ENCODE measurements at regions of chr3 and their contacts with region 1.

Region 1: DNA sequence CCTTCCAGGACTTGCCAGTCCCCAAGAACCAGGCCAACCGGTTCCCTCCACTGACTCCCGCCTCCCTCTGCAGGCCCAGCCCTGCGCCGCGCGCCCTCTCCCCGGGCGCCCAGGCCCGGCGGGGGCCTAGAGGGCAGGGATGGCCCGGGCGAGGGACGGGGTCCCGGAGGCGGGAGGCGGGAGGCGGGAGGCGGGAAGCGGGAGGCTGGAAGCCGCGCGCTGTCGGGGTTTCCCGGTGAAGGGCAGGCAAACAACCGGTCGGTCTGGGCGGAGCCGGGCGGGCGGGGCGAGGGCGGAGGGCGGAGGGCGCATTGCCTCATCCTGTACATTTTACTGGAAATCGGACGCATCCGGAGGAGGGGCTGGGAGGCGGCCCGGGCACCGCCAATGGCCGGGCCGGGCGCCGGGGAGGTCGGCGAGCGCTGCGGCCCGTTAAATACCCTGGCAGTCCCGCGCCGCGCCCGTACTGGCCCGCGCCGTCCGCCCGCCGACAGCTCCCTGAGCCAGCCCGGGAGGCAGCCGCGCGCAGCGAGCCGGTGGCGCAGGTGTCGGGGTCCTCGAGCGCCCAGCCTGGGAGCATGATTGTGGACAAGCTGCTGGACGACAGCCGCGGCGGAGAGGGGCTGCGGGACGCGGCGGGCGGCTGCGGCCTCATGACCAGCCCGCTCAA is at the start of gene NFKBIZ:
- DNase-seq: peak; percentile 95
- CTCF ChIP-seq: no peak

Region 2: GRCh38 chr3:101709126-101709525 is 140.1 kb before region 1 on chr3:
- CTCF ChIA-PET with region 1: no interaction called
- POLR2A ChIA-PET with region 1: no interaction called
- DNase-seq: no peak
- CTCF ChIP-seq: no peak

Region 3: GRCh38 chr3:101819758-101820157 is 29.4 kb before region 1 on chr3:
- CTCF ChIA-PET with region 1: interaction called, 3 read pairs
- POLR2A ChIA-PET with region 1: interaction called, 10 read pairs
- DNase-seq: no peak
- CTCF ChIP-seq: no peak

Region 4: DNA sequence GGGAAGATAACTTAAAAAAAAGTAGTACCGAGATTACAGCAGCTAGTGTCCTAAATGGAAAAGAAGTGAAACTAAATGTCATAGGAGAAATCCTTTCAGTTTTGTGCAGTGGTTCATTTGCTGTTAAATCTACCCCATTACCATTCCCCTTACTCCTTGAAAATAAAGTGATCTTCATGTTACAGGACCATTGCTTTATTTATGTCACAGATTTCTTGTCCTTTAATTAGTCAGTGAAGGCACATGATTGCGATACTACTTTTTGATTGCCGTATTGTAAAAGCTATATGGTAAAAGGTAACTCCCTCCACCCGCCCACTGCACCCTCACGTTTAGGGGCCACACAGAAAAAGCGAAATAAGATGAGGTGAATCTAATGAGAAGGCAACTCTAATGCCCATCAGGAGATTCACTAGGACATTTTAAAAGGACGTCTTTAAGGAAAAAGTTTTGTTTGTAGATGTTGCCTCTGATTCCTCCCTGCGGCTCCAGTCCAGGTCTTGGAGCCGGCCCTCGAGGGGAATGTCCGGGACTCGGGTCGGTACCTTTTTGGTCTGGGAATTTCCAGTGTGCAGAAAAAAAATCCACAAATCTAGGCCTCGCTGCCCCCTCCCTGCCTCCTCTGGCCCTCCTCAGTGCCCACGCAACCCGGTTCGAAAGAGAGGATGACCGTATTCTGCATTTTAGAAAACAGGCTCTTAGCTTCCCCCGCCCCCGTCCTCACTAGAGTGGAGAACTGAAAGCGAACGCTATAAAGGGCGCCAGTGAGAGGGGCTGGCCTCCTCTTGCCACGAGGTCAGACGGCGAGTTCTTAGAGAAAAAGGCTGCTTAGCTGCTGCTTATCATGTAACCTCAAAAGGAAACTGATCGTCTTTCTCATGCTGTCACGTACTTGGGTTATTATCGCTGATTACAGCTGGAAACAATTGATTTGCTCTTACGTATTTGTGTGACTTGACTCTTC is 21.7 kb before region 1 on chr3:
- CTCF ChIA-PET with region 1: interaction called, 6 read pairs
- POLR2A ChIA-PET with region 1: interaction called, 54 read pairs
- DNase-seq: peak; percentile 80
- CTCF ChIP-seq: no peak

Region 5: GRCh38 chr3:101836652-101837598 is 12.3 kb before region 1 on chr3:
- CTCF ChIA-PET with region 1: interaction called, 4 read pairs
- POLR2A ChIA-PET with region 1: interaction called, 42 read pairs
- DNase-seq: no peak
- CTCF ChIP-seq: no peak

Region 6: DNA sequence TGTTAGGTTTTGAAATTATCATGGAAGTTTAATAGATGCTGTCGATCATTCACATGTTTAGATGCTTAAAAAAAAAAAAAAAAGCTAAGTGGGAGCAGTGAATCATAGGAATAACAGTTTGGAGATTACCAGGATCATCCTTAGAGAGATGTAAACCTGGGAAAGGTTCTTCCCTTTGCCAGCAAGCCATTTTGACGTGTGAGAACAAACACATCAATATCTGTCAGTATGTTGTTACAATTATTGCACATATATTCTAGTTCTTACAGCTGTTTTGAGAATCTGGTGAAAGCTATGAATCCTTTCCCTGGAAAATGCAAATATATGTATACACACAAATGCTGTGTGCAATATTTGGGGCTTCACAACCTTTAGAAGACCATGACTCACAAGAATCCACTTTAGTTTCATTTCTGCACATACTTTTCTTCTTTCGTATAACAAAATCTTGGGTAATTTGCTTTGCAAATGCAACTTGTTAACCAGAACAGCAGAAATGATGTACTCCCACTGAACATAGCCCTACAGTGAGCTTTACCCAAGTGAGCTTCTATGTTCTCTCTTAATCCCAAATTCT is 12.1 kb after region 1 on chr3:
- CTCF ChIA-PET with region 1: interaction called, 3 read pairs
- POLR2A ChIA-PET with region 1: interaction called, 23 read pairs
- DNase-seq: no peak
- CTCF ChIP-seq: no peak

Region 7: DNA sequence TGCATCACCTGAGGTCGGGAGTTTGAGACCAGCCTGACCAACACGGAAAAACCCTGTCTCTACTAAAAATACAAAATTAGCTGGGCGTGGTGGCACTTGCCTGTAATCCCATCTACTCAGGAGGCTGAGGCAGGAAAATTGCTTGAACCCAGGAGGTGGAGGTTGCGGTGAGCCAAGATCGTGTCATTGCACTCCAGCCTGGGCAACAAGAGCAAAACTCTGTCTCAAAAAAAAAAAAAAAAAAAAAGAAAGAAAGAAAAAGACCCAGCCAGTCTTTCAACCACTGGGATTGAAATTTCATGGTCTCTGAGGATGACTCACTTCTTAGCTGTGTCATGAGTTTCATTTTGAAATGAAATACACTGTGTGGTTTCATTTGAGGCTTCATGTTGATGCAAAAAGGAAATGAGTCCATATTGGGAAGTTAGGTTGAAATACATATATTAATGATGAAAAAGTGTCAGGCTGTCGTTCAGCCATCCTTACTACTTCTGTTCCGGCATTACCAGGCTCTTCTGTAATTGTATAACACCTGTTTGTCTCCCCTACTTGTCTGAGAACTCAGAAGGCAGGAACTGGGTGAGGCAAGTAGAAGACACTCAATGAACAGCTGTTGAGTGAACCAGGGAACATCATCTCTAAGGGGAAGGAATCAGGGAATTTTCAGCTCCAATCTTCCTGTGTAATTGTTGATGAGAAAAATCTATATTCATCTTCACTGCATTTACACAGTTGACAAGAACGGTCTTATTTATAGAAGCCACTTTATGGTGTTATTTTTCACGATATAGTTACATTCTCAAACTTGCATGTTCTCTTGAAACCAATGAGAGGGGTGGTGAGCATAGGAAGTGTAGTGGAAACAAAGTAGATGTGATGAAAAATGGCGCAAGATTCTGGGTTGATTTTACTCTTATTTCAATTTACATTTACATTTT is 87.5 kb after region 1 on chr3:
- CTCF ChIA-PET with region 1: no interaction called
- POLR2A ChIA-PET with region 1: interaction called, 11 read pairs
- DNase-seq: peak; percentile 81
- CTCF ChIP-seq: no peak

Measured in GM10248 (cell line).